ENCODE measurements at regions of chrX and their contacts with region 1.

Region 1: DNA sequence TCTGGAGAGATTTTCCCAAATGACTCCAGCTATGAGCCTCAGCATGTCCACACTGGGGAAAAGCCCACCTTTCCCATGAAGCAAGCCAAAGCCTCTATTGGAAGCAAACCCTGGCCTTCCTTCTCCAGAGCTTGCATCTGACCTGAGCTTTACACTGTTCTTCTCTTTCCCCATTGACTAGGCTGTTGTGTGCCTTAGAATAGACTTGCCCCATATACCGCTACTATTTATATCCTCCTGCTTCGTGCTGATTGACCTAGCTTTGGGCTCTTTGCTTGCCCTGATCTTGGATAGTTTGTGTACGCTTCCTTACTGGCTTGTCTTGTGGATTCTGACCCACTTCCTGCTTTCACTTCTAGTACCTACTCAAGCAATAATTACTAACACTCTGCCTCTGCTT is 30.9 kb downstream of the FAM9B start:
- DNase-seq: no peak
- H3K4me3 ChIP-seq: no peak overlapping the region
- H3K27ac ChIP-seq: no peak overlapping the region
- H3K4me1 ChIP-seq: no peaks in the 10 kb centered on the region
- H3K27me3 ChIP-seq: no peaks in the 10 kb centered on the region
- CTCF ChIP-seq: no peak

Region 2: GRCh38 chrX:8462488-8462887 is 540.6 kb before region 1 on chrX:
- CTCF ChIA-PET with region 1: no interaction called
- POLR2A ChIA-PET with region 1: no interaction called
- intact Hi-C with region 1: no loop called
- DNase-seq: no peak
- H3K4me3 ChIP-seq: no peak overlapping the region
- H3K27ac ChIP-seq: no peak overlapping the region
- H3K4me1 ChIP-seq: no peaks in the 10 kb centered on the region
- H3K27me3 ChIP-seq: no peaks in the 10 kb centered on the region
- CTCF ChIP-seq: no peak

Region 3: DNA sequence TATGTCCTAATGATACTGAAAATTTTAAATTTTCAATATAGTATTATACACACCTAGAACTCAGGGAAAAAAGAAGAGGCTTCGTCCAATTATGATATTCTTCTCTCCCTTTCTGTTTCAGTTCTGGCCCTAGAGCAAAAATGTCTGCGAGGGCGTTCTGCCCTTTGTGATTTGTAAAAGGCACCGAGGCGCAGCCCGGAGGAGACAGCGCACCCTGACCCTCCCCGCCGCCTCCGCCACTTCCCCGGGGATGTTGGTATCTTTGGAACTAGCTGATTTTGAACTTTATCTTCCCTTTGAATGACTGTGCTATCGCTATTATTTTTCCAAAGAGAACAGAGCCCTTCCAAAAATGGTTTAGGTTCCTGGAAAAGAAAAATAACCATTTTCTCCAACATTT is 204.1 kb after region 1 on chrX:
- CTCF ChIA-PET with region 1: no interaction called
- POLR2A ChIA-PET with region 1: no interaction called
- intact Hi-C with region 1: no loop called
- DNase-seq: no peak
- H3K4me3 ChIP-seq: no peak overlapping the region
- H3K27ac ChIP-seq: no peak overlapping the region
- H3K4me1 ChIP-seq: no peaks in the 10 kb centered on the region
- H3K27me3 ChIP-seq: no peaks in the 10 kb centered on the region
- CTCF ChIP-seq: no peak

Region 4: GRCh38 chrX:9825129-9825790 is 822.2 kb after region 1 on chrX:
- CTCF ChIA-PET with region 1: no interaction called
- POLR2A ChIA-PET with region 1: interaction called, 16 read pairs
- intact Hi-C with region 1: no loop called
- DNase-seq: no peak
- H3K4me3 ChIP-seq: no peak overlapping the region
- H3K27ac ChIP-seq: no peak overlapping the region
- H3K4me1 ChIP-seq: no peaks in the 10 kb centered on the region
- H3K27me3 ChIP-seq: no peaks in the 10 kb centered on the region
- CTCF ChIP-seq: no peak